ENCODE measurements at regions of chr1 and their contacts with region 1.

Region 1: GRCh38 chr1:178542560-178543356 is 29.8 kb downstream of the TEX35 start:
- DNase-seq: peak; percentile 49 to 93
- H3K4me3 ChIP-seq: peak overlapping the region; percentile 88
- H3K4me1 ChIP-seq: peaks cover 2% of the 10 kb centered on the region; the same call in 1 of the 2 replicates
- H3K27me3 ChIP-seq: no peaks in the 10 kb centered on the region

Region 2: DNA sequence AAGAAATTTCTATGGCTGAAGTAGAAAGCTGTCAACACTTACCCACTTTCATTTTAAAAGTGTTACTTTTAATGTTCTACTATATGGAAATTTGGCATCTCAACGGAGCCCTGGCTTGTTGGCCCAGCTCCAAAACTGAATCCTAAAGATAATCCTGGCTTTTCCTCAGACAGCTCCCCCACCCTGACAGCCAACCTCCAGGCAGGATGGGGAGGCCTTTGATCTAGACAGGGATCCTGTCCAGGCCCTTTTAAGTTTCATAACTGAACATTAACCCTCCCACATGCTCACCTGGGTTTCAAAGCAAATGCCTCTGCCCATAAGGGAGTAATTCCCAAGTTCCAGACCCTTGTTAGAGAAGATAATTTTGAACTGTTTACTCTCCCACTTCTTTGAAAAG is 82.9 kb after region 1 on chr1:
- in situ Hi-C with region 1: no loop called
- DNase-seq: no peak
- H3K4me3 ChIP-seq: no peak overlapping the region
- H3K4me1 ChIP-seq: no peaks in the 10 kb centered on the region
- H3K27me3 ChIP-seq: no peaks in the 10 kb centered on the region

Region 3: GRCh38 chr1:178768423-178768822 is 225.7 kb after region 1 on chr1:
- in situ Hi-C with region 1: loop called (anchors 10 kb)
- DNase-seq: peak; percentile 29 to 43
- H3K4me3 ChIP-seq: no peak overlapping the region
- H3K4me1 ChIP-seq: no peaks in the 10 kb centered on the region
- H3K27me3 ChIP-seq: no peaks in the 10 kb centered on the region

Region 4: DNA sequence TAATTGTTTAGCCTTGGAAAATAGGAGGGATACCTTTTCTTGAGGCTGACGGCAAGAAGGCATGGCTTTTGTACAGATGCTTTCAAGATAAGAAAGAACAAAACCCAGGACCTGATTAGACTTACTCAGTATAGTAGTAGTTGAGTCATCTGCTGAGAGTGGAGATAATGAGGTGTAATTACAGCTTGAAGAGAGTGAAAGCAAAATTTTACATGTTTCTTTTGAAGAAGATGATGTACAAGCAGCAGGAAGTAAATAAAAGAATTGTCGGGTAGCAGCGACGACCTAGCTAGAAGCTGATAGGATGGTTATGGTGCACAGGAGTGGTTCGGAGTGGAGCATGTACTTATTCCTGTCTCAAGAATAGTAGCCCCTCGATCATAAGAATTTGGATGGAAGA is 321.6 kb after region 1 on chr1:
- in situ Hi-C with region 1: no loop called
- DNase-seq: no peak
- H3K4me3 ChIP-seq: no peak overlapping the region
- H3K4me1 ChIP-seq: no peaks in the 10 kb centered on the region; the same call in 1 of the 2 replicates
- H3K27me3 ChIP-seq: no peaks in the 10 kb centered on the region

Region 5: DNA sequence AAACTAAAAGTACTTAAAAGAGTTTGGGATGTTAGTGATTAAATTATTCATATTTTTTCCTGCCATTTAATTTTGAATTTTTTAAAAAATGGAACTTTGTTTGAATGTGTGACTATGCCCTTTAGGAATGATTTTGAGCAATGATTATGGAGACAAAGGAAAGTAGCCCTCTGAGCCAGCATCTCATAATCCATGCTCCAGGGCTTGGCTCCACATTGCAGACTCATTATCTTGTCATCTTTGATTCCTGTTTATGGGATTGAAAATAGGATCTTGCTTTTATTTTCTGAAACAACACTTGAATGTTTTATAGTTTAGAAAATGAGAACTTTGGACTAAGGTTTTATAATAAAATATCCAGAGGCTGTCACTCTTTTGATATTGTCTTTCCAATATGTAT is 837.5 kb after region 1 on chr1:
- in situ Hi-C with region 1: loop called (anchors 25 kb)
- DNase-seq: no peak
- H3K4me3 ChIP-seq: no peak overlapping the region
- H3K4me1 ChIP-seq: no peaks in the 10 kb centered on the region
- H3K27me3 ChIP-seq: no peaks in the 10 kb centered on the region

Measured in HAP-1 (cell line).